ENCODE measurements at regions of chr15 and their contacts with region 1.

Region 1: DNA sequence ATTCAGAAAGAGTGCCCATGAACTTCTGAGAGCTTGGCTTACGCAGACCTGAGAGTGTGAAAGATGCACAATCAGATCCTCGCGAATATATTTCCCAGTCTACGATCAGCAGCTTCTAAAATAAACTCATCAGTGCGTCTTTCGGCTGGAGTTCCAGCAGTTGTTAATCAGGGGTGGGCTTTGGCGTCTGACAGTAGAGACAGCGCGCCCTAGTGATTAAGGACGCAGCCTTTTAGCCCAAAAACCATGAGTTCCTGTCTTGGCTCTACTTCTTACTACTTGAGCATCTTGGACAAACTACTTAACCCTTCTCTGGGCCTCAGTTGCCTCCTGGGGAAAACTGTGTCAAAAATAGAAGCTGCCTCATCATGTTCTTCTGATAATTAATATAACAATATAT is 15.8 kb upstream of the ARRDC4 start:
- DNase-seq: no peak
- ATAC-seq: no peak
- H3K4me3 ChIP-seq: no peak overlapping the region
- H3K27ac ChIP-seq: no peak overlapping the region
- H3K4me1 ChIP-seq: no peaks in the 10 kb centered on the region
- H3K27me3 ChIP-seq: no peaks in the 10 kb centered on the region

Region 2: DNA sequence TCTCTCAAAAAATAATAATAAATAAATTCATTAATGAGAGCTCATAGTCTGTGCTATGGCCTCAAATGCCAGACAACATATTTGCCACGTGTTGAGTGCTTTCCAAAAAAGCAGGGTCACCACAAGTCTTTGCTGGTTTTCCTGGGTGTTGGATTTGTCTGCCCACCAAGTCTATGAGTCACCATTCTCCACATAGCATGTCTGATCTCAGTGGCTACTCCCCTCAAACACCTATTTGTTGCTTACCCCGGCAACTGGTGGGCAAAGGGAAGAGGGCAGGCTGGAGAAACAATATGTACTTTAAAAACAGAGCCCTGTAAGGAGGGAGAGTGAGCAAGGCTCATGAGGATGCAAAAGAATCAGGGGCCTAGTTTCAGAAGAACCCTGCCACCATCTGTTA is 104.2 kb before region 1 on chr15:
- intact Hi-C with region 1: no loop called
- DNase-seq: no peak
- ATAC-seq: no peak
- H3K4me3 ChIP-seq: no peak overlapping the region
- H3K27ac ChIP-seq: no peak overlapping the region
- H3K4me1 ChIP-seq: no peaks in the 10 kb centered on the region
- H3K27me3 ChIP-seq: no peaks in the 10 kb centered on the region

Region 3: GRCh38 chr15:98025235-98025634 is 80.5 kb after region 1 on chr15:
- intact Hi-C with region 1: loop called in 1 of 4 experiments (anchors 5 kb)
- DNase-seq: no peak
- ATAC-seq: no peak
- H3K4me3 ChIP-seq: no peak overlapping the region
- H3K27ac ChIP-seq: no peak overlapping the region
- H3K4me1 ChIP-seq: no peaks in the 10 kb centered on the region
- H3K27me3 ChIP-seq: no peaks in the 10 kb centered on the region

Region 4: DNA sequence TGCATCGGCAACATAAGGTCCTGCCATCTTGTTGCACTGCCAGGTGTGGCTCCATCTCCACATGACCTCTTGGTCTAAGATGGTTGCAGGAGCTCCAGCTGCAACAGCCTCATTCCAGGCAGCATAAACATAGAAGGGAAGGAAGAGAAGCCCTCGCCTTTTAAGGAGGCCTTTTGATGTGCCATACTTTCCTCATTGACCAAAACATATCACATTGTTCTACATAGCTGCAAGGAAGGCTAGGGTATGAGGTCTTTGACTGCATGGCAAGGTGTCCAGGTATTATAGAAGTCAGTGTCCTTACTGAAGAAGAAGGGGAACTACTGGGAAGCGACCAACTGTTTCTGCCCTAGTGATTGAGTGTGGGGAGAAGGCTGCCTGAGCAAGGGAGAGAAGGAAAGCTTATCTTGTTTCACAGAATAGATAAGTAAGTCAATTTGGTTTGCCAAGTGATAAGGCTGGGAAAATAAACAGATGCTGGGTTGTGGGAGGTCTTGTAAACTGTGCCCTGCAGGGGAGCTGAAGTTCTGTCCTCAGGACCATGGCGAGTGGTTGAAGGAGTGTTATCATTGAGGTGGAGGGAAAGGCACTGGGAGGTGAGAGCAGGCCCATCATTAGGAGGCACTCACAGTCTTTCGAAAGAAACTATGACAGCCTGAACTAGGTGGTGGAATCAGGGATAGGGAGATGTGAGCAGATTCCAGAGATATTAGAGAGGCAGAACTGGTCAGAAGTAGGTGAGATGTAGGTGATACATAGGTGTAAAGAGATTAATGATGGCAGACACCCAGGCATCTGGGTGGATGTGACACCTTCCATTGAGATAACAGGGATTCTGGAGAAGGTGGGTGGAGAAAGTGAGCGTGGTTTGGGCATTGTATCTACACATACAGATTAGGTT is 609.8 kb after region 1 on chr15:
- intact Hi-C with region 1: no loop called
- DNase-seq: no peak
- ATAC-seq: no peak
- H3K4me3 ChIP-seq: no peak overlapping the region
- H3K27ac ChIP-seq: no peak overlapping the region
- H3K4me1 ChIP-seq: no peaks in the 10 kb centered on the region
- H3K27me3 ChIP-seq: no peaks in the 10 kb centered on the region